ENCODE measurements at regions of chr19 and their contacts with region 1.

Region 1: GRCh38 chr19:49877020-49877878 is at the starts of genes AKT1S1 and TBC1D17:
- DNase-seq: peak; percentile 99 to 100
- H3K4me3 ChIP-seq: peak within 1 kb of the TSS; percentile 87
- H3K4me3 Mint-ChIP-seq: no peak within 1 kb of the TSS
- H3K27ac Mint-ChIP-seq: no peak within 1 kb of the TSS
- H3K4me1 ChIP-seq: peaks cover 9% of the 10 kb centered on the region; the same call in 1 of the 2 replicates
- H3K4me1 Mint-ChIP-seq: no peaks in the 10 kb centered on the region
- H3K27me3 ChIP-seq: no peaks in the 10 kb centered on the region
- H3K27me3 Mint-ChIP-seq: no peaks in the 10 kb centered on the region
- CTCF ChIP-seq: no peak
- total RNA-seq, gene AKT1S1: 64.6 and 77.6 TPM in 2 replicates
- total RNA-seq, gene TBC1D17: 55.3 and 56.5 TPM in 2 replicates

Region 2: GRCh38 chr19:49889687-49890348 is 12.6 kb after region 1 on chr19:
- CTCF ChIA-PET with region 1: interaction called, 4 read pairs
- POLR2A ChIA-PET with region 1: interaction called, 4 read pairs
- intact Hi-C with region 1: loop called (anchors 1 kb)
- DNase-seq: peak; percentile 90 to 94
- H3K4me3 ChIP-seq: peak overlapping the region; percentile 86
- H3K4me3 Mint-ChIP-seq: peak overlapping the region; percentile 89
- H3K27ac Mint-ChIP-seq: peak overlapping the region; percentile 85
- H3K4me1 ChIP-seq: peaks cover 12% of the 10 kb centered on the region
- H3K4me1 Mint-ChIP-seq: no peaks in the 10 kb centered on the region
- H3K27me3 ChIP-seq: no peaks in the 10 kb centered on the region
- H3K27me3 Mint-ChIP-seq: peaks cover 3% of the 10 kb centered on the region
- CTCF ChIP-seq: peak; percentile 81 to 88

Region 3: DNA sequence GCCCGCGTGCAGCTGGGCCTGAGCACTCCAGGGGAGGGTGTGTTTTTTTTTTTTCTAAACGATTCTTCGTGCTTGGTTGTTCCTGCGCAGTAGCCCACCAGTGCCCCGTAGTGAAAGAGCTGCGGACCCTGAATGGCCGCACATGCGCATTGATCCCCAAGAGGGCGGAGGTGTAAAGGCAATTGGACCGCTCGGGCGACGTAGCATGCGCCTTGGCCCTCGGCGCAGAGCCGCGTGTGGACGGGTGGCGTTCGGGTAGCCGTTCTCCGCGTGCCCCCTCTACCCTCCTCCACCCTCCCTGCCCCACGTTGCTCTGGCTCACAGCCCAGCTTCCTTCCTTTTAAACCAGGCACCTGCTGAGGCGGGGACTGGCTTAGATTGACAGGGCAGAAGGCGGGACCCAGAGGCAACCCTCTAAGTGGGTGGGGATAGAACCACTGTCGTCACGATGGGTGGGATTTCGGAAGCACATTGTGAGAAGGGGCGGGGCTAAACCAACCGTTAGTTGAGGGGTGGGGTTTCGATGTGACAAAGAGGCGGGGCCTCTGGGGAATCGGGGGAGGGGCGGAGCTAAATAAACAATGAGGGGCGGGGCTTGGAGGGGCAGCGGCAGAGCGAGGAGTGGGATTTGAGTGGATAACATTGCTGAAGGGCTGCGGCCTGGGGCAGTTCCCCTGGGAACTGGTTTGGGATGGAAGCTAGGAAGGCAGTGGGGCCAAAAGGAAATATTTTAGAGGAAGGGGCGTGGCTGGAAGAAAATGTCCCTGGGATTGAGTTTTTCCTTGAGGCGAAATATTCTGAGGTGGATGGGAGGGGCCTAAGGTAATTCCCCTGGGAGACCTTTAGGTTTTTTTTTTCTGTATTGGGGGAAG is 52.6 kb after region 1 on chr19:
- CTCF ChIA-PET with region 1: no interaction called
- POLR2A ChIA-PET with region 1: interaction called, 6 read pairs
- intact Hi-C with region 1: loop called (anchors 1 kb)
- DNase-seq: peak; percentile 94 to 97
- H3K4me3 ChIP-seq: peak overlapping the region; percentile 99
- H3K4me3 Mint-ChIP-seq: peak overlapping the region; percentile 81
- H3K27ac Mint-ChIP-seq: peak overlapping the region; percentile 92
- H3K4me1 ChIP-seq: peaks cover 9% of the 10 kb centered on the region
- H3K4me1 Mint-ChIP-seq: peaks cover 23% of the 10 kb centered on the region
- H3K27me3 ChIP-seq: no peaks in the 10 kb centered on the region
- H3K27me3 Mint-ChIP-seq: no peaks in the 10 kb centered on the region
- CTCF ChIP-seq: peak in 1 of 2 experiments; percentile 16

Region 4: GRCh38 chr19:49968279-49968922 is 91.2 kb after region 1 on chr19:
- CTCF ChIA-PET with region 1: no interaction called
- POLR2A ChIA-PET with region 1: no interaction called
- intact Hi-C with region 1: no loop called
- DNase-seq: no peak
- H3K4me3 ChIP-seq: no peak overlapping the region
- H3K4me3 Mint-ChIP-seq: no peak overlapping the region
- H3K27ac Mint-ChIP-seq: no peak overlapping the region
- H3K4me1 ChIP-seq: no peaks in the 10 kb centered on the region
- H3K4me1 Mint-ChIP-seq: no peaks in the 10 kb centered on the region
- H3K27me3 ChIP-seq: no peaks in the 10 kb centered on the region; the same call in 1 of the 2 replicates
- H3K27me3 Mint-ChIP-seq: peaks cover 2% of the 10 kb centered on the region
- CTCF ChIP-seq: no peak